ENCODE measurements at regions of chr2 and their contacts with region 1.

Region 1: GRCh38 chr2:181904022-181904632 is 12.6 kb downstream of the ITPRID2 start:
- DNase-seq: no peak
- CTCF ChIP-seq: peak; percentile 45

Region 2: GRCh38 chr2:181258720-181259119 is 645.4 kb before region 1 on chr2:
- CTCF ChIA-PET with region 1: no interaction called
- POLR2A ChIA-PET with region 1: no interaction called
- DNase-seq: no peak
- CTCF ChIP-seq: no peak

Region 3: DNA sequence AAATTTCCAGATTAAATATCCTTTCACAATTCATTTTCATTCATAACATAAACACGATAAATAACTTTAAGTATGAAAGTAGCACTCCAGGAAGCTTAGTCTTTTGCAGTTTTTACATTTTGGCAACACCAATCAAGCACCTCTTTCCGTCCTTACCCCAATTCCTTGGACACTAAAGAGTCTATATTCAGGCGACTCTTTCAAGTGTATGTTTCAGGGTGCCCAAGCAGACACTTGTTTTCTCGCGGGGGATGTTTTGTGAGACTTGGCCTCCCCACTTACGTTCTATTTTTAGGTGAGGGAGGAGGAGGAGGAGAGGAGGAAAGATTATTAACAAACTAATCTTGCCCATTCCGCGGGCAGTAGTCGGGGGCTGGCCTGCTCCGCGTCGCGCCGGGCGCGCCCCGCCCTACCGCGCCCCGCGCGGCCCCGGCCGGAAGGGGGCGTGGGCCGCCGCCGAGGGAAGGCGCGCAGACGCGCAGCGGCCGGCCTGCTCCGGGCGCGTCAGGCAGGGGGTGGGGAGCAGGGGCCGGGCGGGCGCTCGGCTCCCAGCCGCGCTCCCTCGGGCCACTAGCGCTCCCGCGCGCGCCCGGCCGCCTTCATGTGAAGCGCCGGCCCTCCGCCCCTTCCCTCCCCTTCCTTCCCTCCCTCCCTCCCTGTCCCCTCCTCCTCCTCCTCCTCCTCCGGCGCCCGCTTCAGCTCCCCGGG is 12.7 kb before region 1 on chr2 and contains the start of gene ITPRID2:
- CTCF ChIA-PET with region 1: interaction called, 28 read pairs
- POLR2A ChIA-PET with region 1: interaction called, 4 read pairs
- DNase-seq: peak; percentile 96
- CTCF ChIP-seq: peak; percentile 34